Heart right ventricle (tissue), 16 donors: ENCODE measurements at regions of chr6 and their contacts with region 1.

Region 1: GRCh38 chr6:125169058-125169457 is 15.5 kb downstream of the TPD52L1 start:
- DNase-seq: no peak
- ATAC-seq: peak in 7 of 8 donors; percentile 39 to 76 (median 60)
- H3K4me3 ChIP-seq: no peak overlapping the region
- H3K27ac ChIP-seq: peak overlapping the region in 1 of 10 donors; percentile 23
- H3K4me1 ChIP-seq: peaks cover 0 to 16% (median 4%) of the 10 kb centered on the region in 9 donors
- H3K27me3 ChIP-seq: no peaks in the 10 kb centered on the region
- CTCF ChIP-seq: no peak

Region 2: DNA sequence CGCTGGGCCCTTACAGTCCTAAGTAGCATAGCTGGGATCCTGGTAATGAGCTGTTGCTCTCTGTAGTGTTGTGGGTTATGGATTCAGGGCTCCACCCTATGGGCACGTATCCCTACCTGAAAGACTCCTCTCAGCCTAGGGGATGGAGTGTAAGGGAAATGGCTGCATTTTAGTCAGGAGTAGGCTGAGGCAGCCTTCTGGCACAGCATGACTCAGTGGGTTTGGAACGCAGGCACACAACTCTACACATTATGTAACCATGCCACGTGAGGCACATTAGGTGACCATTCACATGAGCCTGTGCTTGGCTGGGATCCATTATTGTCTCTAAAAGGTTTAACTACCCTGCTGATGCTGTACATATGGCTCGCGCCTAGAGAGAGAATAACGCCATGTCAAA is 104.9 kb after region 1 on chr6:
- intact Hi-C with region 1: loop called in 1 of 10 experiments (anchors 10 kb)
- DNase-seq: peak in 1 of 2 donors; percentile 36
- ATAC-seq: peak in 7 of 8 donors; percentile 24 to 68 (median 60)
- H3K4me3 ChIP-seq: no peak overlapping the region
- H3K27ac ChIP-seq: peak overlapping the region in 2 of 10 donors; percentile 16
- H3K4me1 ChIP-seq: peaks cover 0 to 15% (median 3%) of the 10 kb centered on the region in 9 donors
- H3K27me3 ChIP-seq: no peaks in the 10 kb centered on the region
- CTCF ChIP-seq: no peak